GM12878 (cell line): ENCODE measurements at regions of chr7 and their contacts with region 1.

Region 1: DNA sequence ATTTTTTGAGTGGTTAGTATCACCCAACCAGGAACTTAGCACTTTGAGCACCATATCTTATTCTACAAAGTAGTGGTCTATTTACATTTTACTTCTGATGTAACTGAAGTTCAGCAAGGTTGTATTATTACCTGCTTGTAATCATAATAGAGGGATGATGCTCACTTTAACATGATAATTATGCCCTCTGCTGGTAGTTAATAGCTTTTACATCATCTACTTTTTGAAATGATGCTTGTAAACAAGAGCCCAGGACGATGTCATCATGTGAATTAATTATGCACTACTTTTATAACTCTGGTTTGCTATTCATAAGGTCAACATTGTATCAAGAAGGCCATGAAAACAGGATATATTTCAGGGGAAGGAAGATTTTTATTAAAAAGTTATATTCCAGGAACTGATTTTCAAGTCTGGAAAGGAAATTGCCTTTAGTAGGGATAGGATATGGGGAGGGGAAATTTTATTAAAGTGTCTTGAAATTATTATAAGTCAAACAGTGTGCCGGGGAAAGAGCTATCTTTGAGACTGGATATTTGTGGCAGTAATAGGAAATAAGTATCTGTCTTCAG is 80.3 kb upstream of the SCIN start:
- DNase-seq: no peak
- ATAC-seq: peak; percentile 75
- H3K4me3 ChIP-seq: no peak overlapping the region
- H3K27ac ChIP-seq: no peak overlapping the region
- H3K4me1 ChIP-seq: no peaks in the 10 kb centered on the region
- H3K27me3 ChIP-seq: no peaks in the 10 kb centered on the region
- CTCF ChIP-seq: peak; percentile 21 to 52 (median 32); a peak in 4 of 6 replicates
- EP300 ChIP-seq: no peak
- POLR2A ChIP-seq: no peak
- RAD21 ChIP-seq: peak; percentile 49

Region 2: GRCh38 chr7:11835260-11835659 is 654.9 kb before region 1 on chr7:
- CTCF ChIA-PET with region 1: interaction called, 4 read pairs
- POLR2A ChIA-PET with region 1: no interaction called
- RAD21 ChIA-PET with region 1: no interaction called
- SMC1A ChIA-PET with region 1: no interaction called
- in situ Hi-C with region 1: no loop called
- intact Hi-C with region 1: loop called (anchors 5 kb)
- DNase-seq: no peak
- ATAC-seq: no peak
- H3K4me3 ChIP-seq: no peak overlapping the region
- H3K27ac ChIP-seq: no peak overlapping the region
- H3K4me1 ChIP-seq: no peaks in the 10 kb centered on the region
- H3K27me3 ChIP-seq: peaks cover 1 to 16% of the 10 kb centered on the region in 2 experiments; a peak in 3 of 4 replicates
- CTCF ChIP-seq: peak in 1 of 3 experiments; percentile 20; a peak in 1 of 6 replicates
- EP300 ChIP-seq: no peak
- POLR2A ChIP-seq: no peak
- RAD21 ChIP-seq: peak; percentile 27

Region 3: GRCh38 chr7:12389089-12389700 is 101.0 kb before region 1 on chr7:
- CTCF ChIA-PET with region 1: interaction called, 8 read pairs
- POLR2A ChIA-PET with region 1: no interaction called
- RAD21 ChIA-PET with region 1: no interaction called
- SMC1A ChIA-PET with region 1: interaction called, 4 read pairs
- in situ Hi-C with region 1: no loop called
- intact Hi-C with region 1: loop called (anchors 1 kb)
- DNase-seq: no peak
- ATAC-seq: peak; percentile 94
- H3K4me3 ChIP-seq: no peak overlapping the region
- H3K27ac ChIP-seq: no peak overlapping the region
- H3K4me1 ChIP-seq: no peaks in the 10 kb centered on the region
- H3K27me3 ChIP-seq: no peaks in the 10 kb centered on the region
- CTCF ChIP-seq: peak; percentile 75 to 80 (median 76)
- EP300 ChIP-seq: no peak
- POLR2A ChIP-seq: no peak
- RAD21 ChIP-seq: peak; percentile 61

Region 4: GRCh38 chr7:12458520-12459131 is 31.6 kb before region 1 on chr7:
- CTCF ChIA-PET with region 1: interaction called, 110 read pairs
- POLR2A ChIA-PET with region 1: no interaction called
- RAD21 ChIA-PET with region 1: interaction called, 40 read pairs
- SMC1A ChIA-PET with region 1: interaction called, 45 read pairs
- in situ Hi-C with region 1: loop called (anchors 5 kb)
- intact Hi-C with region 1: loop called (anchors 1 kb)
- DNase-seq: no peak
- ATAC-seq: peak; percentile 95
- H3K4me3 ChIP-seq: no peak overlapping the region
- H3K27ac ChIP-seq: no peak overlapping the region
- H3K4me1 ChIP-seq: no peaks in the 10 kb centered on the region
- H3K27me3 ChIP-seq: no peaks in the 10 kb centered on the region
- CTCF ChIP-seq: peak; percentile 59 to 73 (median 66)
- EP300 ChIP-seq: no peak
- POLR2A ChIP-seq: no peak
- RAD21 ChIP-seq: peak; percentile 77

Region 5: GRCh38 chr7:12549106-12549505 is 58.9 kb after region 1 on chr7:
- CTCF ChIA-PET with region 1: no interaction called
- POLR2A ChIA-PET with region 1: no interaction called
- RAD21 ChIA-PET with region 1: no interaction called
- SMC1A ChIA-PET with region 1: no interaction called
- in situ Hi-C with region 1: no loop called
- intact Hi-C with region 1: no loop called
- DNase-seq: no peak
- ATAC-seq: no peak; the same call in 2 of the 3 replicates
- H3K4me3 ChIP-seq: no peak overlapping the region
- H3K27ac ChIP-seq: no peak overlapping the region
- H3K4me1 ChIP-seq: no peaks in the 10 kb centered on the region
- H3K27me3 ChIP-seq: no peaks in the 10 kb centered on the region
- CTCF ChIP-seq: no peak
- EP300 ChIP-seq: no peak
- POLR2A ChIP-seq: no peak
- RAD21 ChIP-seq: no peak